Tibial artery (tissue), 4 donors: ENCODE measurements at regions of chr7 and their contacts with region 1.

Region 1: GRCh38 chr7:100137851-100138760 is 10.6 kb upstream of the LAMTOR4 start:
- DNase-seq: no peak
- H3K4me3 ChIP-seq: no peak overlapping the region
- H3K27ac ChIP-seq: no peak overlapping the region
- H3K4me1 ChIP-seq: no peaks in the 10 kb centered on the region
- H3K27me3 ChIP-seq: peaks cover 0 to 8% of the 10 kb centered on the region in 2 donors
- CTCF ChIP-seq: no peak

Region 2: DNA sequence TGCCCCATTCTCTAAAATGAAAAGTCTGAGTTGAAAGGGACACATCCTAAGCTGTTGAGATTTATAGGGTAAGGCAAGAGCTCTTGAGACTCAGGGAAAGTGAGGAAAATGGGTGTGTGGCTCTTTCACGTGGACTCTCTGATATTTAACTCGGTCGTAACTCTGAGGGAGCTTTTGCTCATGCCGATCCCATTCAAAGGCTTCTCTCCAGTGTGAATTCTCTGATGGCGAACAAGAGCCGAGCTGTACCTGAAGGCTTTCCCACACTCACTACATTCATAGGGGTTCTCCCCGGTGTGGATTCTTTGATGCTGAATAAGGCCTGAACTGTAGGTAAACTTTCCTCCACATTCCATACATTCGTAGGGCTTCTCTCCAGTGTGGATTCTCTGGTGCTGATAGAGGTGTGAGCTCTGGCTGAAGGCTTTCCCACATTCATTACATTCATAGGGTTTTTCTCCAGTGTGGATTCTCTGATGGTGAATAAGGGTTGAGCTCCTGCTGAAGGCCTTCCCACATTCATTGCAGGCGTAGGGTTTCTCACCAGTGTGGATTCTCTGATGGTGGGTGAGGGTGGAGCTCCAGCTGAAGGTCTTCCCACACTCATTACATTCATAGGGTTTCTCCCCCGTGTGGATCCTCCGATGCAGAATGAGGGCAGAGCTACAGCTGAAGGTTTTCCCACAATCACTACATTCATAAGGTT is 66.9 kb before region 1 on chr7:
- intact Hi-C with region 1: no loop called
- DNase-seq: no peak
- H3K4me3 ChIP-seq: no peak overlapping the region
- H3K27ac ChIP-seq: no peak overlapping the region
- H3K4me1 ChIP-seq: no peaks in the 10 kb centered on the region
- H3K27me3 ChIP-seq: no peaks in the 10 kb centered on the region
- CTCF ChIP-seq: no peak

Region 3: GRCh38 chr7:100215895-100216294 is 77.8 kb after region 1 on chr7:
- intact Hi-C with region 1: loop called (anchors 5 kb)
- DNase-seq: no peak
- H3K4me3 ChIP-seq: no peak overlapping the region
- H3K27ac ChIP-seq: no peak overlapping the region
- H3K4me1 ChIP-seq: no peaks in the 10 kb centered on the region
- H3K27me3 ChIP-seq: peaks cover 0 to 9% of the 10 kb centered on the region in 2 donors
- CTCF ChIP-seq: no peak